WTC11 (cell line): ENCODE measurements at regions of chr12 and their contacts with region 1.

Region 1: GRCh38 chr12:48873096-48873495 is 7.4 kb upstream of the RND1 start:
- DNase-seq: no peak
- ATAC-seq: no peak
- H3K4me3 Mint-ChIP-seq: no peak overlapping the region
- H3K27ac Mint-ChIP-seq: no peak overlapping the region
- H3K4me1 Mint-ChIP-seq: no peaks in the 10 kb centered on the region
- H3K27me3 Mint-ChIP-seq: no peaks in the 10 kb centered on the region; the same call in 1 of the 2 replicates
- CTCF ChIP-seq: no peak

Region 2: DNA sequence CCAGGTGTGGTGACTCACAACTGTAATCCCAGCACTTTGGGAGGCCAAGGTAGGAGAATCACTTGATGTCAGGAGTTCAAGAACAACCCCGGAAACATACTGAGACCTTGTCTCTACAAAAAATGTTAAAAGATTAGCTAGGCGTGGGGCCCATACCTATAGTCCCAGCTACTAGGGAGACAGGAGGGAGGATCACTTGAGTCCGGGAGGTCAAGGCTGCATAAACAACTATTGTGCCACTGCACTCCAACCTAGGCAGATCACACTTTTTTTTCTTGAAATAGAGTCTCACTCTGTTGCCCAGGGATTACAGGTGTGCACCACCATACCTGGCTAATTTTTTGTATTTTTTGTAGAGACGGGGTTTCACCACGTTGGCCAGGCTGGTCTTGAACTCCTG is 13.5 kb before region 1 on chr12:
- CTCF ChIA-PET with region 1: interaction called, 134 read pairs
- POLR2A ChIA-PET with region 1: interaction called, 13 read pairs
- DNase-seq: no peak
- ATAC-seq: no peak
- H3K4me3 Mint-ChIP-seq: no peak overlapping the region
- H3K27ac Mint-ChIP-seq: no peak overlapping the region
- H3K4me1 Mint-ChIP-seq: peaks cover 26% of the 10 kb centered on the region
- H3K27me3 Mint-ChIP-seq: 0 out of 2 replicates have a peak, but pooled peaks cover under 1% of the 10 kb centered on the region
- CTCF ChIP-seq: no peak

Region 3: GRCh38 chr12:48994224-48995060 is 121.3 kb after region 1 on chr12:
- CTCF ChIA-PET with region 1: no interaction called
- POLR2A ChIA-PET with region 1: no interaction called
- DNase-seq: no peak
- ATAC-seq: no peak
- H3K4me3 Mint-ChIP-seq: 0 out of 2 replicates have a peak overlapping the region, but pooled peaks have one; percentile 20
- H3K27ac Mint-ChIP-seq: no peak overlapping the region
- H3K4me1 Mint-ChIP-seq: peaks cover 17% of the 10 kb centered on the region
- H3K27me3 Mint-ChIP-seq: peaks cover 76% of the 10 kb centered on the region
- CTCF ChIP-seq: no peak